ENCODE measurements at regions of chr19 and their contacts with region 1.

Region 1: DNA sequence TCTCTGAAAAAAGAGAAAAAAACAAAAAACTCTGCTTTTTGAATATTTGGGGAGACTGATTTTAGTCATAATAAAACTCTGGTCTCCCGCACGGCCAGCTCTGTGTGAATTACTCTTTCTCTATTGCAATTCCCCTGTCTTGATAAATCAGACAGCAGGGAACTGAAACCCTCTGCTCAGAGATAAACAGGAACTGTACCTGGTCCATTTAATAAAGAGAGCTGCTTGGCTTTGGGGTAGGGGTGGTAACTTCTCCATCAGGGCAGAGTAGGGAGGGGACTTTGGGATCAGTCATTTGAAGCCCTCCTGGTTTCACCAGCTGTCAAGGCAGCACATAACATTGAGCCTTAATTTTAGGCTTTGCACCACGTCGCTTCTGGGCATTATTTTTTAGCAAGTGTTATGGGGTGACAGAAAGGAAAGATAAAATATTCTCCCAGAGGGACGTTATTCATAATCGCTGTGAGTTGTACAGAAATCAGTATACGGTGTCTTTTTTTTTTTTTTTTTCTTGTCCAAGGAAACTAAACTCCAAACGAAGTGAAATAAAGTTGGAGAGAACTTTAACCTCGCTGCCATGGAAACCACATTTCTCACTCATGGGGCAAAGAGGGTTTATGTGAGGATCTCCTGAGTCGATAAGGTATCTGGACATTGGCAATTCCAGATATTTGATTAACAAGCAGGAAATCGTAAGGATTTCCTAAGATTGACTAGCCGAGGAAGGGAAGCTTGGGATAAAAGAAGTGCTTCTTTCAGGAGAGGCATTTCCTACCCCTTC is 99.0 kb upstream of the MRI1 start:
- DNase-seq: no peak
- H3K4me3 ChIP-seq: no peak overlapping the region
- H3K27ac ChIP-seq: no peak overlapping the region
- H3K4me1 ChIP-seq: no peaks in the 10 kb centered on the region
- H3K27me3 ChIP-seq: no peaks in the 10 kb centered on the region
- CTCF ChIP-seq: no peak

Region 2: GRCh38 chr19:13255041-13255718 is 410.1 kb before region 1 on chr19:
- CTCF ChIA-PET with region 1: no interaction called
- dilution Hi-C with region 1: no loop called
- in situ Hi-C with region 1: no loop called
- intact Hi-C with region 1: no loop called
- DNase-seq: no peak
- H3K4me3 ChIP-seq: no peak overlapping the region
- H3K27ac ChIP-seq: no peak overlapping the region
- H3K4me1 ChIP-seq: no peaks in the 10 kb centered on the region
- H3K27me3 ChIP-seq: peaks cover 2% of the 10 kb centered on the region
- CTCF ChIP-seq: no peak

Region 3: GRCh38 chr19:13621413-13621812 is 43.9 kb before region 1 on chr19:
- CTCF ChIA-PET with region 1: no interaction called
- dilution Hi-C with region 1: loop called (anchors 5 kb)
- in situ Hi-C with region 1: no loop called
- intact Hi-C with region 1: no loop called
- DNase-seq: peak; percentile 98
- H3K4me3 ChIP-seq: no peak overlapping the region
- H3K27ac ChIP-seq: no peak overlapping the region
- H3K4me1 ChIP-seq: peaks cover 9% of the 10 kb centered on the region
- H3K27me3 ChIP-seq: no peaks in the 10 kb centered on the region
- CTCF ChIP-seq: peak; percentile 33 to 60

Region 4: DNA sequence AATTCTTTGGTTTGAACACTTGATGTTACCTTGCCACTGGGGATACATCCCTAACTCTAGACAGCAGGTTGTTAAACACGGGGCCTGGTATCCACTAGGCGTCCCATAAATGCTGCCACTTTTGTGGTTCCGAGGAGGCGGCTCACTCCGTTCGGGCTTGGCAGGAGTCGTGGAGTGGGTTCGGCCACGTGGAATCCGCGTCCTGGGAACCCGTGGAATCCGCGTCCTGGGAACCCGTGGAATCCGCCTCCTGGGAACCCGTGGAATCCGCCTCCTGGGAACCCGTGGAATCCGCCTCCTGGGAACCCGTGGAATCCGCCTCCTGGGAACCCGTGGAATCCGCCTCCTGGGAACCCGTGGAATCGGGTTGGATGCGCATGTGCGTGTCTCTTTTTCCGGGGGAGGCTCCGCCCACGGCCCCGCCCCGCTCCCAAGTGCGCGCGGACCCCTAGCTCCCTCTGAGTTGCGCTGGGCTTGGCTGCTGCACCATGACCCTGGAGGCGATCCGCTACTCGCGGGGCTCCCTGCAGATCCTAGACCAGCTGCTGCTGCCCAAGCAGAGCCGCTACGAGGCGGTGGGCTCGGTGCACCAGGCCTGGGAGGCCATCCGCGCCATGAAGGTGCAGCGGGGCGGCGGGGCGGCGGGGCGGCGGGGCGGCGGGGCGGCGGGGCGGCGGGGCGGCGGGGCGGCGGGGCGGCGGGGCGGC is 98.9 kb after region 1 on chr19 and contains the start of gene MRI1:
- CTCF ChIA-PET with region 1: no interaction called
- dilution Hi-C with region 1: loop called (anchors 5 kb)
- in situ Hi-C with region 1: no loop called
- intact Hi-C with region 1: no loop called
- DNase-seq: peak; percentile 43
- H3K4me3 ChIP-seq: peak within 1 kb of the TSS; percentile 82 to 99 (median 89)
- H3K27ac ChIP-seq: peak within 1 kb of the TSS; percentile 24
- H3K4me1 ChIP-seq: peaks cover 4% of the 10 kb centered on the region
- H3K27me3 ChIP-seq: no peaks in the 10 kb centered on the region
- CTCF ChIP-seq: peak in 1 of 2 donors; percentile 12
- total RNA-seq, gene MRI1: 29.0 to 36.7 TPM

Measured in mammary epithelial cell (primary cell).